Sigmoid colon (tissue), 7 donors: ENCODE measurements at regions of chr11 and their contacts with region 1.

Region 1: GRCh38 chr11:68206187-68206601 is 6.9 kb downstream of the KMT5B start:
- DNase-seq: no peak
- H3K4me3 ChIP-seq: no peak overlapping the region
- H3K27ac ChIP-seq: peak overlapping the region in 3 of 4 donors; percentile 11 to 64 (median 48)
- H3K4me1 ChIP-seq: peaks cover 0 to 69% (median 60%) of the 10 kb centered on the region in 4 donors
- H3K27me3 ChIP-seq: no peaks in the 10 kb centered on the region
- CTCF ChIP-seq: peak; percentile 66 to 84 (median 77)
- EP300 ChIP-seq: no peak
- POLR2A ChIP-seq: no peak

Region 2: GRCh38 chr11:68003846-68004550 is 202.2 kb before region 1 on chr11 and contains the start of gene UNC93B1:
- intact Hi-C with region 1: loop called (anchors 10 kb)
- DNase-seq: peak; percentile 94
- H3K4me3 ChIP-seq: peak within 1 kb of the TSS; percentile 39 to 81 (median 68)
- H3K27ac ChIP-seq: peak within 1 kb of the TSS; percentile 56 to 79 (median 76)
- H3K4me1 ChIP-seq: peaks cover 0 to 18% (median 13%) of the 10 kb centered on the region in 4 donors
- H3K27me3 ChIP-seq: no peaks in the 10 kb centered on the region
- CTCF ChIP-seq: no peak
- EP300 ChIP-seq: no peak
- POLR2A ChIP-seq: no peak
- total RNA-seq, gene UNC93B1: 24.7 to 27.6 (median 25.6) TPM

Region 3: GRCh38 chr11:68076371-68077042 is 129.7 kb before region 1 on chr11:
- intact Hi-C with region 1: loop called (anchors 2 kb)
- DNase-seq: no peak
- H3K4me3 ChIP-seq: no peak overlapping the region
- H3K27ac ChIP-seq: no peak overlapping the region
- H3K4me1 ChIP-seq: no peaks in the 10 kb centered on the region
- H3K27me3 ChIP-seq: no peaks in the 10 kb centered on the region
- CTCF ChIP-seq: peak in 1 of 4 experiments; percentile 13
- EP300 ChIP-seq: no peak
- POLR2A ChIP-seq: no peak

Region 4: DNA sequence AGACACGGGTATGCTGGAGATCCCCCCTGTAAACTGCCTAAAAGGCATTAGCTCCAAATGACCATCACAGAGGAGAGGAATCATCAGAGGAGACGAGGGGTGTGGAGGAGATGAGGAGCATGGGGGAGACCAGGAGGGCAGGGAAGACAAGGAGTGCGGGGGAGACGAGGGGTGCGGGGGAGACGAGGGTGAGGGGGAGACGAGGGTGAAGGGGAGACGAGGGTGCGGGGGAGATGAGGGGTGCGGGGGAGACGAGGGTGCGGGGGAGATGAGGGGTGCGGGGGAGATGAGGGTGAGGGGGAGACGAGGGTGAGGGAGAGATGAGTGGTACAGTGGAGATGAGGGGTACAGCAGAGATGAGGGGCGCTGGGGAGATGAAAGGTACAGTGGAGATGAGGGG is 460.7 kb after region 1 on chr11:
- intact Hi-C with region 1: no loop called
- DNase-seq: peak; percentile 83
- H3K4me3 ChIP-seq: no peak overlapping the region
- H3K27ac ChIP-seq: no peak overlapping the region
- H3K4me1 ChIP-seq: no peaks in the 10 kb centered on the region
- H3K27me3 ChIP-seq: peaks cover 0 to 6% (median 0%) of the 10 kb centered on the region in 3 donors
- CTCF ChIP-seq: no peak
- EP300 ChIP-seq: no peak
- POLR2A ChIP-seq: no peak